Mammary epithelial cell (primary cell): ENCODE measurements at regions of chr16 and their contacts with region 1.

Region 1: GRCh38 chr16:2811703-2812471 is 5.2 kb upstream of the PRSS21 start:
- DNase-seq: no peak
- H3K4me3 ChIP-seq: no peak overlapping the region
- H3K27ac ChIP-seq: no peak overlapping the region
- H3K4me1 ChIP-seq: no peaks in the 10 kb centered on the region
- H3K27me3 ChIP-seq: no peaks in the 10 kb centered on the region
- CTCF ChIP-seq: no peak

Region 2: DNA sequence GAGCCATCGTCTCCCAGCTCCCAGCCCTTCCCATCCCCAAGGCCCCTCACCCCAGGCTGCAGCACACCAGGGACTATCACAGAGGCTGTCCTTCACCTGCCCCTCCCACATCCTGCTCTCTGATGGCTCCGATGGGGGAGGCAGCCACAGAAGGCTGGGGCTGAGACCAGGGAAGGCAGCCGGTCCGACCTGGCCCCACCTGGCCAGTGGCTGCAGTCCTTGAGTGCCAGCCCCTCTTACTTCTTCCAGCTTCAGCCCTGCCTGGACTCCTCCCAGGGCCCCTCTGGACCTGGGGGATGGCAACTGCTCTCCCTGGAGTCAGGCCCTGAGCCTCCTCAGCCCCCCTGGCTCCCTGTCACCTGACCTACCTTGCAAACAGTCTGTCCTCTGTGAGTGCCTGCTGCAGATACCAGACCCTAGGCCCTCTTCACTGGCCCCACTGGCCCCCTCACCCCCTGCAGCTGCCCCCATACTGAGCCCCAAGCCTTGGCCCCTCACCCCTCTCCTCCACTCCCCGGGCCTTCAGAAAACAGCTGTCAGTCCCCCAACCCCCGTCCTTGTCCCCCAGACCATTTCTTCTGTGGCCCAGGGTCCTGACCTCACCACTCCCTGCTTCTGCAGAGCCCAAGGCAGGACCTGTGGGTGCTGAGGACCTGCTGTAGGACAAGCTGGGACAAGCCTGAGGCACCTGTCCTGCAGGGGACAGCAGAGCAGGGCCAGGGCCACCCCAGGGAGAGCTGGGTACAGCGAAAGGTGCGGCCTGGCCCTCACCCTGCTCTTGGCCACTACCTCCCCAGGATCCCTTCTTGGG is 72.1 kb before region 1 on chr16:
- CTCF ChIA-PET with region 1: no interaction called
- dilution Hi-C with region 1: loop called (anchors 5 kb)
- in situ Hi-C with region 1: no loop called
- intact Hi-C with region 1: no loop called
- DNase-seq: no peak
- H3K4me3 ChIP-seq: no peak overlapping the region
- H3K27ac ChIP-seq: no peak overlapping the region
- H3K4me1 ChIP-seq: peaks cover 8% of the 10 kb centered on the region
- H3K27me3 ChIP-seq: no peaks in the 10 kb centered on the region
- CTCF ChIP-seq: no peak

Region 3: DNA sequence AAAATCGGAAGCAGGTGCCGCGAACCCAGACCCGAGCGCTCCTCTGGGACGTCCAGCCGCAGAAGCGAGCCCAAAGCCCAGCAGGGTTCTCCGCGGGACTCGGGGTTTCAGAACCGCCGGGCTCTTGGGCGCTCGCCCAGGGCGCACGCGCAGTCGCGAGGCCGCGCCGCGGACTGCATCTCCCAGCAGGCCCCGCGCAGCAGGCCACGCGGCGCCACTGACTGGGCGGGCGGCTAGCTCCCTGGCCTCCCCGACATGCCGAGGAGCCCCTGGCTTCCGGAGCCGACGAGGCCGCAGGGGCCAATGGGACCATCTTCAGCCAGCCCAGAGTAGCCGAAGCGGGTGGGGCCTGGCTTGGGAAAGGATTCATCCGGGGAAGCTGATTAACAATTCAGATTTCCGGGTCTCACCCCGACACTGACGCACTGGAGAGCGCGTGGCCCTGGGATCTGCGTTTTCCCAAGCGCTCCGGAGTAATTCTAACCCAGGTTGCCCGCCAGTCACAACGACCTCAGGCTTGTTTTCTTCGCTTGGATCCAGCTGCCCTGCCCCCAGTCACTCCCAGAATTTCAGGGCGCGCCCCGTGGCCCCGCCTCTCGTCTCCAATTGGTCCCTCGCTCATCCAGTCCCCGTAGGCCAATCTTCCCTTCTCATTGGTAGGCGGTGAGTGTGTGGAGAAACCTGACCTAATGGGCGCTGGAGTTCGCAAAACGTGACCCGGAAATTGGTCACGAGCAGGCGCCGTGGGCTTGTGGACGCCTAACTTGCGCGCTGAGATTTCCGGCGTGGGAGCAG is 471.0 kb after region 1 on chr16 and contains the start of gene ZNF263:
- CTCF ChIA-PET with region 1: no interaction called
- dilution Hi-C with region 1: no loop called
- in situ Hi-C with region 1: no loop called
- intact Hi-C with region 1: no loop called
- DNase-seq: peak; percentile 98
- H3K4me3 ChIP-seq: peak within 1 kb of the TSS; percentile 86 to 98 (median 91)
- H3K27ac ChIP-seq: peak within 1 kb of the TSS; percentile 96
- H3K4me1 ChIP-seq: peaks cover 12% of the 10 kb centered on the region
- H3K27me3 ChIP-seq: no peaks in the 10 kb centered on the region
- CTCF ChIP-seq: no peak
- total RNA-seq, gene ZNF263: 23.7 to 54.8 TPM